Lower leg skin (tissue), 4 donors: ENCODE measurements at regions of chr13 and their contacts with region 1.

Region 1: DNA sequence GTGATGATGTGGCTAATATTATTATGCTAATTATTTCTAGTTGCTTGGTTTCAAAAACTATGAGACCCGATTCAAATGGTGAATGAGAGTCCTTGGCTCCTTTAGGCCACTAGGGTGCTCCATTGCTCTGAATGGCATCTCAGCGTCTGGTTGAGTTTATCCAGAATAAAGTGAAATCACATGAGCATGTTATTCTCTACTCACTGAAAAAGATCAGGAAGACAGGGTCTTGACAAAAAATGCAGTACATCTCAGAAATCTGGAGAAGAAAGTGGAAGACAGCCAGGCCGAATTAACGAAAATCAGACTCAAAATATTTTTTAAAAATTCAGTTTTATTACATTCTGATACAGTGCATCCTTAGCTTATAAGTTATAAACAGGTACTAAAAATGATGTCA is 516.2 kb downstream of the MYO16 start:
- DNase-seq: no peak
- H3K4me3 ChIP-seq: no peak overlapping the region
- CTCF ChIP-seq: no peak
- POLR2A ChIP-seq: no peak

Region 2: GRCh38 chr13:109786457-109787134 is 641.0 kb after region 1 on chr13 and contains the start of gene IRS2:
- intact Hi-C with region 1: loop called (anchors 10 kb)
- DNase-seq: peak; percentile 95 to 99
- H3K4me3 ChIP-seq: peak within 1 kb of the TSS; percentile 62
- CTCF ChIP-seq: no peak
- POLR2A ChIP-seq: peak in 1 of 2 donors; percentile 98
- total RNA-seq, gene IRS2: 52.6 to 114 (median 56.1) TPM